ENCODE measurements at regions of chr1 and their contacts with region 1.

Region 1: GRCh38 chr1:111203681-111204200 is 3.3 kb upstream of the DENND2D start:
- DNase-seq: peak; percentile 77 to 89
- ATAC-seq: peak; percentile 40 to 71 (median 70)
- H3K4me3 ChIP-seq: peak overlapping the region; percentile 52
- H3K4me3 Mint-ChIP-seq: peak overlapping the region; percentile 75
- H3K27ac ChIP-seq: peak overlapping the region; percentile 87
- H3K27ac Mint-ChIP-seq: peak overlapping the region; percentile 91 to 95
- H3K4me1 ChIP-seq: peaks cover 57% of the 10 kb centered on the region
- H3K4me1 Mint-ChIP-seq: peaks cover 65 to 69% of the 10 kb centered on the region in 2 donors
- H3K27me3 ChIP-seq: no peaks in the 10 kb centered on the region
- H3K27me3 Mint-ChIP-seq: no peaks in the 10 kb centered on the region
- CTCF ChIP-seq: no peak

Region 2: DNA sequence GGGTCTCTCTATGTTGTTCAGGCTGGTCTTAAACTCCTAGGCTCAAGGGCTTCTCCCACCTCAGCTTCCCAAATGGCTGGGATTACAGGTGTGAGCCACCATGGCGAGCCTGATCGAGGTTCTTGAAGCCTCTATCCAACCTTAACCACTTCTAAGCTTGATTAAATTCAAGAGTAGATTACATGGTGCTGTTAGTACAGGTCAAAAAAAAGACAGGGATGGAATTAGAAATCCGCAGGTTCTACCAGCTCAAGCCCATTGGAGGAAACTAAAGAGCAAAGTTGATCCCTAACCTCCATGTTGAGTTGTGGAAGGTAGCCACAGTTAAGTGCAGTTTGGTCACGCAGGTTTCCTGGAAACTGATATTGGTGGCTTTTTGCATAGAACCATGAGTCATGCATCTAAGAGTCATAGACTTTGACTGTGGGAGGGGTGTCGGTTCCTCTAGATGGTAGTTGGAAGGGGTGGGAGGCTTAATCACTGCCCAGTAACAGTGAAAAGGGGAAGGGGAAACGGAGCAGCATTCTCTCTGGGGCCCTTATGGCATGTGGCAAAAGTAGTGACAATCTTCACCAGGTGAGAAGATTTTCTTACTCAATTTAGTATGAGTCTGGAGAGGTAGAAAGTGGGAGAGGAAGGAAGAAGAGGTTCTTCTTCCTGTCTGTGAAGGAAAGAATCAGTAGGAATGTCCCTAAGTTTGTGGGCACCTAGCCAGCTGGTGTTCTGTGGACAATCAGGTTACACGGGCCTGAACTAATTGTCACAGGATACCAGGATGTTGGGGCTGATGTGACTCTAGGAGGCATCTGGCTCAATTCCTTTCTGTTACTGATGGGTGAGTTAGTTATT is 323.8 kb before region 1 on chr1:
- intact Hi-C with region 1: loop called (anchors 5 kb)
- DNase-seq: peak; percentile 42 to 78
- ATAC-seq: peak; percentile 60 to 79 (median 67)
- H3K4me3 ChIP-seq: peak overlapping the region; percentile 8
- H3K4me3 Mint-ChIP-seq: peak overlapping the region; percentile 99
- H3K27ac ChIP-seq: peak overlapping the region; percentile 86
- H3K27ac Mint-ChIP-seq: peak overlapping the region; percentile 92 to 99
- H3K4me1 ChIP-seq: peaks cover 35% of the 10 kb centered on the region
- H3K4me1 Mint-ChIP-seq: peaks cover 75 to 99% of the 10 kb centered on the region in 2 donors
- H3K27me3 ChIP-seq: no peaks in the 10 kb centered on the region
- H3K27me3 Mint-ChIP-seq: no peaks in the 10 kb centered on the region
- CTCF ChIP-seq: no peak

Region 3: DNA sequence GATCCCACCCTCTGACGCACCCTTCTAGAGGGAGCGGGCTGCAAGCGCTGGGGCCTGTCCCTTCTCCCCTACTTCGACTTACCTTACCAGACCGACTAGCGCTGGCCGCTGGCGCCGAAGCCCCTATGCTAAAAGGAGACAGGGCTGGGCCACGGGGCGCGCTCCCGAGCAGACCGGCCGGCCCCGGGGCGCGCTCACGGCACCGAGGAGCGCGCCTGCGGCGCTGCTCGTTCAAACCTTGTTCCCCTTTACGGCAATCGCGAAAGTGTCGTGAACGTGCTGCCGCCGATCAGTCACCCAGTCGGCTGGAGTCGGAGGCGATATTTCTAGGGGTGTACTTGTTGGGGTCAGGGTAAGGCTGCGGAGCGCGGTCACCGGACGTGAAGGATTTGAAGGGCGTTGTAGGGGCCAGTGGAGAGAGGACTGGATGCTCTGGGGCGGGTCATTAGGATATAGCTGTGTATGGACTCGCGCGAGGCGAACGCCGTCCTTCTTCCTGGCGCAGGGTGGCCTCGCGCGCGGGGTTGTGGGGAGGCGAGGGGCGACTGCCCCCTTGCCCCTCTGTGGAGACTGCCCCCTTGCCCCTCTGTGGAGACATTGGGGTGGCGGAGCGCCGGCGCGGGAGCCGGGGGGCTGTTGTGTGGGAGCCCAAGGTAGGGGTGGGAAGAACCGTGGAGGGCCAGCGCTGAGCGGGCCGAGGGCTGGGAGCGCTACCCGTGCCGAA is 63.6 kb before region 1 on chr1 and contains the starts of genes CEPT1 and DRAM2:
- intact Hi-C with region 1: loop called (anchors 5 kb)
- DNase-seq: peak; percentile 91 to 95
- ATAC-seq: peak; percentile 79 to 96 (median 82)
- H3K4me3 ChIP-seq: peak within 1 kb of the TSS; percentile 88
- H3K4me3 Mint-ChIP-seq: peak within 1 kb of the TSS; percentile 99
- H3K27ac ChIP-seq: peak within 1 kb of the TSS; percentile 96
- H3K27ac Mint-ChIP-seq: peak within 1 kb of the TSS; percentile 91 to 98
- H3K4me1 ChIP-seq: no peaks in the 10 kb centered on the region
- H3K4me1 Mint-ChIP-seq: peaks cover 40 to 48% of the 10 kb centered on the region in 2 donors
- H3K27me3 ChIP-seq: no peaks in the 10 kb centered on the region
- H3K27me3 Mint-ChIP-seq: no peaks in the 10 kb centered on the region
- CTCF ChIP-seq: no peak
- total RNA-seq, gene CEPT1: 35.4 to 49.5 (median 40.9) TPM
- total RNA-seq, gene DRAM2: 35.8 to 40.8 (median 36.4) TPM

Region 4: DNA sequence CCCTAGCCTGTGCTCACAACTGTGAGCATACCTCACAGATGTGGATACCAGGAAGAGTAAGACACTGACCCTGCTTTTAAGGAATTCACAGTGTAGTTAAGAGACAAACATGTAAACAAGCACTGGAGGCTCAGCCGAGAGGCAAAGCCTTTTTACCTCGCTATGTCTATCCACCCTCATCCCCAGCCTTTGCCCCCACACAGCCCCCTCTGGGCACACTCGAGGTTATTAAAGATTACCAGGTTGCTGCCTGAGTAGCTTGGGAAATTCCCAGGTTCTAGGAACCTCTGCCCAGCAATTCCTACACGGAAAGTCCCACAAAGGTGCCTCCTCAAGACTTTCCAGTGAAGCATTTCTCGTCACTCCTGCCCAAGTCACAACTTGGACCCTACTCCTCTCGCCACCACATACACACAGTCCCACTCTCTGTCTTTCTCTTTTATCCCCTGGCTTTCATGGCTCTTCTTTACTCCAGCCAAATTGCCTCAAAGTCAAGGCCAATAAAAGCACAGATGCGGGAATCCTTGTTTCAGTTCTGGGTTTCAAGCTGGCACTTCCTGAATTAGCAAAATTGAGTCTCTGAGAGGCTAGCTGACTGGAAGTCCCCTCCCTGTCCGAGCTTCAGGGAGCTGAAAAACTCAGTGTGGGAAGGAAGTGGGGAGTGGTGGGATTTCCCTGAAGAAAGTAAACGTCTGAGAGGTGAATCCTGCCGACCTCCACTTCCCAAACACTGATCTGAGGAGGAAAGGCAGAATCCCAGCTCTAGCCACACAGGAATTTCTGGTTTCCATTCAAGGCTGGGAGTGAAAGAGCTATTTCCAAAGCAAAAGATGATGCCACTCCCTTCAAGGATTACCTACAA is 10.9 kb before region 1 on chr1:
- intact Hi-C with region 1: loop called (anchors 1 kb)
- DNase-seq: peak in 1 of 2 donors; percentile 79
- ATAC-seq: peak; percentile 57 to 75 (median 72)
- H3K4me3 ChIP-seq: no peak overlapping the region
- H3K4me3 Mint-ChIP-seq: peak overlapping the region; percentile 55
- H3K27ac ChIP-seq: peak overlapping the region; percentile 70
- H3K27ac Mint-ChIP-seq: peak overlapping the region; percentile 91 to 95
- H3K4me1 ChIP-seq: peaks cover 88% of the 10 kb centered on the region
- H3K4me1 Mint-ChIP-seq: peaks cover 99 to 100% of the 10 kb centered on the region in 2 donors
- H3K27me3 ChIP-seq: no peaks in the 10 kb centered on the region
- H3K27me3 Mint-ChIP-seq: no peaks in the 10 kb centered on the region
- CTCF ChIP-seq: no peak

Region 5: DNA sequence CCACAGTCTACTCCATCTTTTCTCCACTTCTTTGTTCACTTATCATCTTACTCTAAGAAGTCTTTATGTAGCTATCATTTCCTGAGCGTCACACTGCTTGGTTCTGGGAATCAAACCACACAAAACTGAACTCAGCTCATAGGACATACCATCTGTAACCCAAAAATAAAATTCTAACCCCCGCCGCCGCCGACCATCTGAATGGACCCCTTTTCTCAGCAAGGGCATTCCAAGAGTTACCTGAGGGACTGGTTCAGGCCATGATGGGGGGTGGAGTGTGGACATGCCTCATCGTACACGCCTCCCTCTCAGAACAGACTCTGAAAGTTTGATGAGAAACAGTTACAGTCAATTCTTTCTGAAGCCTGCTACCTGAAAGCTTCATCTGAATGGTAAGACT is 11.1 kb after region 1 on chr1:
- intact Hi-C with region 1: loop called (anchors 1 kb)
- DNase-seq: peak in 1 of 2 donors; percentile 67
- ATAC-seq: no peak
- H3K4me3 ChIP-seq: no peak overlapping the region
- H3K4me3 Mint-ChIP-seq: peak overlapping the region; percentile 86
- H3K27ac ChIP-seq: peak overlapping the region; percentile 80
- H3K27ac Mint-ChIP-seq: peak overlapping the region; percentile 94 to 95
- H3K4me1 ChIP-seq: peaks cover 73% of the 10 kb centered on the region
- H3K4me1 Mint-ChIP-seq: peaks cover 71 to 72% of the 10 kb centered on the region in 2 donors
- H3K27me3 ChIP-seq: no peaks in the 10 kb centered on the region
- H3K27me3 Mint-ChIP-seq: peaks cover 0 to 5% of the 10 kb centered on the region in 2 donors
- CTCF ChIP-seq: no peak

Region 6: DNA sequence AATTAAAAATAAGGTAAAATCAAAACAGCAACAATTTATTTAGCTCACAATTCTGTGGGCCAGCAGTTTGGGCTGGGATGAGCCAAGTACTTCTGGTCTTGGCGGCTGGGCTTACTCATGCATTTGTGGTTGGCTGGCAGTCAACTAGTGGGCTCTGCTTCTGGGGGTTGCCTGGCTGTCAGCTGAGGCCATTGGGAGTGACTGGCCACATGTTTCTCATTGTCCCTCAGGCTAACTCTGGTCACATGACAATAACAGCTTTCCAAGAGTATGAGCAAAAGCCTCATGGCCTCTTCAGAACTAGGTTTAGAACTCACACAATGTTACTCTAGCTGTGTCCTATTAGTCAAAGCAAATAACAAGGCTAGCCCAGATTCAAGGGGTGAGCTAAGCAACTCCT is 71.3 kb after region 1 on chr1:
- intact Hi-C with region 1: no loop called
- DNase-seq: peak in 1 of 2 donors; percentile 13
- ATAC-seq: peak in 1 of 3 donors; percentile 39
- H3K4me3 ChIP-seq: no peak overlapping the region
- H3K4me3 Mint-ChIP-seq: no peak overlapping the region
- H3K27ac ChIP-seq: no peak overlapping the region
- H3K27ac Mint-ChIP-seq: no peak overlapping the region
- H3K4me1 ChIP-seq: peaks cover 17% of the 10 kb centered on the region
- H3K4me1 Mint-ChIP-seq: peaks cover 17 to 21% of the 10 kb centered on the region in 2 donors
- H3K27me3 ChIP-seq: peaks cover 21% of the 10 kb centered on the region
- H3K27me3 Mint-ChIP-seq: peaks cover 44% of the 10 kb centered on the region in 2 donors
- CTCF ChIP-seq: no peak